Activated CD8-positive, alpha-beta T cell treated with anti-CD3 and anti-CD28 coated beads for 36 hours (primary cell): ENCODE measurements at regions of chr19 and their contacts with region 1.

Region 1: DNA sequence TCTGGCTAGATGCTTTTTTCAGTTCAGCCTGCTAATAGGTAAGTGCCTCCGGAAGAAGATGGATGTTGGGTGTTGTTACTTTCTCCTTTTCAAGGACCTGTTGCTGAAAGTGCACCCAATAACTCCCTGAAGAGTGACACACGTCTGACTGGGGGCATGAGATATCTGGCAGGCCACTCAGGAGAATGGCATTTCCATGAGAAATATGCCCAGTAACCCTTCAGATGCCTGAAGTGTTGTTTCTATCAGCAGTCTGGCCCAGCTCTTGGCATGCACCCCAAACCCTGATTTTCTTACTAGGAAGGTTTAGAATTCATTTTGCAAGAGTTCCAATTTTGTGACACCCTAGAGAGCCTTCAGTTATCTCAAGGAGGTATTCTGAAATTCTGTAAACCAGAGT is 71.5 kb downstream of the ARHGAP35 start:
- DNase-seq: no peak
- ATAC-seq: no peak
- H3K4me3 Mint-ChIP-seq: no peak overlapping the region
- H3K27ac Mint-ChIP-seq: no peak overlapping the region
- H3K4me1 Mint-ChIP-seq: peaks cover 52% of the 10 kb centered on the region
- H3K27me3 Mint-ChIP-seq: no peaks in the 10 kb centered on the region
- CTCF ChIP-seq: no peak

Region 2: GRCh38 chr19:46919324-46919723 is 13.0 kb before region 1 on chr19:
- CTCF ChIA-PET with region 1: interaction called, 10 read pairs
- POLR2A ChIA-PET with region 1: no interaction called
- intact Hi-C with region 1: no loop called
- DNase-seq: peak; percentile 46
- ATAC-seq: peak; percentile 61
- H3K4me3 Mint-ChIP-seq: no peak overlapping the region
- H3K27ac Mint-ChIP-seq: no peak overlapping the region
- H3K4me1 Mint-ChIP-seq: peaks cover 49% of the 10 kb centered on the region
- H3K27me3 Mint-ChIP-seq: no peaks in the 10 kb centered on the region
- CTCF ChIP-seq: no peak